ENCODE measurements at regions of chr12 and their contacts with region 1.

Region 1: GRCh38 chr12:30145684-30146032 is 361.9 kb upstream of the TMTC1 start:
- DNase-seq: no peak
- H3K4me3 ChIP-seq: no peak overlapping the region
- H3K27ac ChIP-seq: no peak overlapping the region
- H3K4me1 ChIP-seq: no peaks in the 10 kb centered on the region
- H3K27me3 ChIP-seq: no peaks in the 10 kb centered on the region
- CTCF ChIP-seq: no peak
- EP300 ChIP-seq: no peak
- POLR2A ChIP-seq: no peak
- RAD21 ChIP-seq: no peak

Region 2: GRCh38 chr12:30134229-30134628 is 11.4 kb before region 1 on chr12:
- CTCF ChIA-PET with region 1: interaction called, 27 read pairs
- POLR2A ChIA-PET with region 1: no interaction called
- DNase-seq: no peak
- H3K4me3 ChIP-seq: no peak overlapping the region
- H3K27ac ChIP-seq: no peak overlapping the region
- H3K4me1 ChIP-seq: no peaks in the 10 kb centered on the region
- H3K27me3 ChIP-seq: no peaks in the 10 kb centered on the region
- CTCF ChIP-seq: peak in 2 of 3 experiments; percentile 8 to 30; a peak in 2 of 4 replicates
- EP300 ChIP-seq: no peak
- POLR2A ChIP-seq: no peak
- RAD21 ChIP-seq: peak; percentile 40 to 49

Region 3: GRCh38 chr12:30384976-30385375 is 239.3 kb after region 1 on chr12:
- CTCF ChIA-PET with region 1: no interaction called
- POLR2A ChIA-PET with region 1: no interaction called
- DNase-seq: no peak
- H3K4me3 ChIP-seq: no peak overlapping the region
- H3K27ac ChIP-seq: no peak overlapping the region
- H3K4me1 ChIP-seq: no peaks in the 10 kb centered on the region
- H3K27me3 ChIP-seq: no peaks in the 10 kb centered on the region
- CTCF ChIP-seq: no peak
- EP300 ChIP-seq: no peak
- POLR2A ChIP-seq: no peak
- RAD21 ChIP-seq: no peak